ENCODE measurements at regions of chr17 and their contacts with region 1.

Region 1: GRCh38 chr17:76557368-76558197 is 17.7 kb downstream of the PRCD start:
- DNase-seq: peak; percentile 80 to 94 (median 92)
- H3K4me3 ChIP-seq: peak overlapping the region; percentile 52 to 95 (median 81)
- H3K27ac ChIP-seq: peak overlapping the region in 56 of 59 donors; percentile 23 to 93 (median 80)
- H3K27me3 ChIP-seq: no peaks in the 10 kb centered on the region
- CTCF ChIP-seq: peak in 45 of 56 donors; percentile 15 to 61 (median 37)

Region 2: GRCh38 chr17:76585818-76586593 is 28.4 kb after region 1 on chr17 and contains the start of gene ST6GALNAC2:
- intact Hi-C with region 1: no loop called
- DNase-seq: peak in 1 of 10 donors; percentile 64
- H3K4me3 ChIP-seq: peak within 1 kb of the TSS; percentile 26 to 72 (median 54)
- H3K27ac ChIP-seq: peak within 1 kb of the TSS in 1 of 59 donors; percentile 36
- H3K27me3 ChIP-seq: peaks cover 0 to 36% (median 18%) of the 10 kb centered on the region in 45 donors
- CTCF ChIP-seq: peak in 41 of 56 donors; percentile 7 to 65 (median 33)
- total RNA-seq, gene ST6GALNAC2: 0.38 to 10.0 (median 1.8) TPM in 115 of 120 experiments, not detected in the others

Region 3: GRCh38 chr17:76623271-76624146 is 65.9 kb after region 1 on chr17:
- intact Hi-C with region 1: loop called (anchors 1 to 5 kb)
- DNase-seq: peak; percentile 61 to 85 (median 68)
- H3K4me3 ChIP-seq: peak overlapping the region in 2 of 59 donors; percentile 23 to 28
- H3K27ac ChIP-seq: no peak overlapping the region
- H3K27me3 ChIP-seq: no peaks in the 10 kb centered on the region
- CTCF ChIP-seq: peak; percentile 83 to 99 (median 96)

Region 4: GRCh38 chr17:76678330-76678729 is 120.7 kb after region 1 on chr17:
- intact Hi-C with region 1: loop called in 1 of 2 experiments (anchors 5 kb)
- DNase-seq: no peak
- H3K4me3 ChIP-seq: no peak overlapping the region
- H3K27ac ChIP-seq: peak overlapping the region in 1 of 59 donors; percentile 18
- H3K27me3 ChIP-seq: no peaks in the 10 kb centered on the region
- CTCF ChIP-seq: no peak

Region 5: GRCh38 chr17:76714822-76715495 is 157.4 kb after region 1 on chr17:
- intact Hi-C with region 1: loop called in 1 of 2 experiments (anchors 5 kb)
- DNase-seq: peak in 8 of 10 donors; percentile 54 to 81 (median 68)
- H3K4me3 ChIP-seq: peak overlapping the region in 2 of 59 donors; percentile 1 to 18
- H3K27ac ChIP-seq: peak overlapping the region in 35 of 59 donors; percentile 5 to 81 (median 50)
- H3K27me3 ChIP-seq: no peaks in the 10 kb centered on the region
- CTCF ChIP-seq: peak; percentile 64 to 97 (median 84)

Region 6: GRCh38 chr17:77208217-77208808 is 650.7 kb after region 1 on chr17:
- intact Hi-C with region 1: no loop called
- DNase-seq: peak in 7 of 10 donors; percentile 50 to 78 (median 60)
- H3K4me3 ChIP-seq: peak overlapping the region in 6 of 59 donors; percentile 12 to 25 (median 18)
- H3K27ac ChIP-seq: peak overlapping the region; percentile 44 to 98 (median 94)
- H3K27me3 ChIP-seq: no peaks in the 10 kb centered on the region
- CTCF ChIP-seq: peak in 50 of 56 donors; percentile 16 to 70 (median 49)